Endothelial cell of umbilical vein (primary cell): ENCODE measurements at regions of chr6 and their contacts with region 1.

Region 1: GRCh38 chr6:169789982-169790927 is 38.8 kb downstream of the ERMARD start:
- DNase-seq: peak; percentile 75
- H3K4me3 ChIP-seq: peak overlapping the region; percentile 14 to 33 (median 24)
- H3K27ac ChIP-seq: no peak overlapping the region
- H3K4me1 ChIP-seq: peaks cover 6% of the 10 kb centered on the region
- H3K27me3 ChIP-seq: peaks cover 0 to 4% of the 10 kb centered on the region in 2 experiments
- CTCF ChIP-seq: peak; percentile 97 to 99
- POLR2A ChIP-seq: no peak

Region 2: DNA sequence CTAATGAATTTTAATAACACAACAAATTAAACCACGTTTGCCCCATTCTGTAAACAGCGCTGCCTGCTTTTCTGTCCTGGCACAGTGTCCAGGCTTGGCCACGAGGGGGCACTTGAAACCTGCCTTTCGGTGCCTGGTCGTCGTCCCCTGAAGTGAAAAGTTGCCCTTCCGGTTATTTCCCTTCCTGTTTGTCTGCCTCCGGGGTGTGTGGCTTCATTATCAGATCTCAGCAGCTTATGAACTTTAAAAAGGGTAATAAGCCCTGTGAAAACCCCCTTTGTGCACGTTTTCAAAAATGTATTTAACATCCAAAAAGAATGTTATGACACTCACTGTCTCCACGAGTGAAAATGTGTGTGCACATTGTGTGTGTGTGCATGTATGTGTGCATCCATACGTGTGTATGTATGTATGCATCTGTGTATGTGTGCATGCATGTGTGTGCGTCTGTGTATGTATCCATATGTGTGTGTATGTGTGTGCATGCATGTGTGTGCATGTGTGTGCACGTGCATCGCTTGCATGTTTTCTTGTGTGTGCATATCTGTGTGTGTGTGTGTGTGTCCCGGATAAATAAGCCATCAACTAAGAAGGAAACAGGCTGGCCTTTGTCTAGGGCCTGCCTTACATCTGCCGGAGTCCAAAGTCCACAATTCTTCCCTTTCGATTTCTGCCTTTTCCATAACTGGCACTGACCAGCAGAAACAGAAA is 895.0 kb before region 1 on chr6:
- CTCF ChIA-PET with region 1: interaction called, 4 read pairs
- POLR2A ChIA-PET with region 1: no interaction called
- dilution Hi-C with region 1: no loop called
- intact Hi-C with region 1: loop called (anchors 1 kb)
- DNase-seq: peak; percentile 44
- H3K4me3 ChIP-seq: no peak overlapping the region
- H3K27ac ChIP-seq: no peak overlapping the region
- H3K4me1 ChIP-seq: no peaks in the 10 kb centered on the region
- H3K27me3 ChIP-seq: no peaks in the 10 kb centered on the region
- CTCF ChIP-seq: peak; percentile 88
- POLR2A ChIP-seq: no peak

Region 3: DNA sequence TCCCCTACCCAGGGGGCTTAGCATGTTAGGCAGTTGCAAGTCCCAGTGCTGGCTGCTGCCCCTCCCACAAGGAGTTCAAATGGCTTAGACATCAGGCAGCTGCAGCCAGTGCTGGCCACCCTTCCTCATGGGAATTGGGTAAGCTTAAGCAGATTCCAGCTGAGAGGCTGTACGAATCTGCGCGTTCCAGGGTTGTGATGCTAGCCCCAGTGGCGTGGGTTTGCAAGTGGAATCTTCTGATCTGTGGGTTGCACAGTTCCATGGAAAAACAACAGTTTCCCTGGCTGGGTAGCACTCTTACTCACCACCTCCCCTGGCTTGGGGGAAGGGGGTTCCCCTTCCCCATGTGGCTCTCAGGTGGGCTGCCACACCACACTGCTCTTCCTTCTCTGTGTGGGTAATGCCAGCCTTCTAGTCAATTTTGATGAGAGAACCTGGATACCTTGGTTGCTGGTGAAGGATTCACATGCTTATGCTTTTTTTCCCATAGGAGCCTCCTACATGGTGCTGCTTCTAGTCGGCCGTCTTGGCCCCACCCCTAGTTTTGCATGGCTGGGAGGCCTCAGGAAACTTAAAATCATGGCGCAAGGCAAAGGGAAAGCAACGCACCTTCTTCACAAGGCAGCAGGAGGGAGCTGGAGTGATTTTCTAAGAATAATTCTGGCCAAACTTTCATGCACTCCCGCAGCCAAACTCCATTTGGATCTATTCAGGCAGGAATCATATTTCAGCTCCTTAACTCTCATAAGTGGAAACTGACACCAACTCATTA is 51.9 kb before region 1 on chr6:
- CTCF ChIA-PET with region 1: no interaction called
- POLR2A ChIA-PET with region 1: no interaction called
- dilution Hi-C with region 1: no loop called
- intact Hi-C with region 1: no loop called
- DNase-seq: no peak
- H3K4me3 ChIP-seq: no peak overlapping the region
- H3K27ac ChIP-seq: no peak overlapping the region
- H3K4me1 ChIP-seq: no peaks in the 10 kb centered on the region
- H3K27me3 ChIP-seq: peaks cover 0 to 8% of the 10 kb centered on the region in 2 experiments
- CTCF ChIP-seq: no peak
- POLR2A ChIP-seq: no peak

Region 4: GRCh38 chr6:169800668-169801395 is 10.6 kb after region 1 on chr6:
- CTCF ChIA-PET with region 1: interaction called, 33 read pairs
- POLR2A ChIA-PET with region 1: no interaction called
- dilution Hi-C with region 1: no loop called
- intact Hi-C with region 1: no loop called
- DNase-seq: no peak
- H3K4me3 ChIP-seq: no peak overlapping the region
- H3K27ac ChIP-seq: no peak overlapping the region
- H3K4me1 ChIP-seq: no peaks in the 10 kb centered on the region
- H3K27me3 ChIP-seq: peaks cover 0 to 16% of the 10 kb centered on the region in 2 experiments
- CTCF ChIP-seq: no peak
- POLR2A ChIP-seq: no peak

Region 5: DNA sequence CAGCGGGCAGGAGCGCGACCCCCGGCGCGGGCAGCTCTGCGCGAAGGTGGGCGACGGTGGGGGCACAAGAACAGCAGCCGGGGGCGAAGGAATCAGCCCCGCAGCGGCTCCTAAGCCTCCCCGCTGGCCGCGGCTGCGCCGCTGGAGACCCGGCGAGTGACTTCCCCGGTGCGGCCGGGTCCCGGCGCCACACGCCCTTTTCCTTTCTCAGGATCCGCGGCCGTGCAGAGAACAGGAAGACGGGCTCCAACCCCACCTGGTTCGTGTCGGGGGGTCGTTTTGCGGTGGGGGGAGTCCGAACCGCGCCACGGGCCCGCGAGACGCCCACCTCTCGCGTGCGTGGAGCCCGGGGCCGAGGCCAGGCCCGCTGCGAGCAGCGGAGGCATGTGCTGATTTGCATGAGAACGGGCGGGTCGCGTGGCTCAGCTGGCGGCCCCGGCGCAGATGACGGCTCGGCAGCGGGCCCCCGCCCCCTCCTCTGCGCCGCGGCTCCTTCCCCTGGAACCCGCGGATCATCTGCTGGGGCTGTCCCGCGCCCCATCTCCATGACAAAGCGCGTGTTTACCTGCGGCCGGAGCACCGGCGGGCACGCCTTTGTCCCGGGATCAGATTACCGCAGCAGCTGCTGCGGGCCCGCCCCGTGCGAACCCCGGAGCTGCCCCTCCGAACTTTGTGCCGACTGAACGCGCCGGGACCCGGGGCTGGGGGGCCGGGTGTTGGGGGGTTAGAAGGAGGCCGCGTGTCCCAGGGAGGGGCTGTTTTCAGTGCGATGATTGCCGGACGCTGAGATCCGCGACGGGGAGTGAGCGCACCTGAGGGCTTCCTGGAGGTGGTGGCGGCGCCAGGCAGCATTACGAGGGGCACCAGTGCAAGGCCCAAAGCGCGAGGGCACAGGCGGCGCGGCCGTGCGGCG is 505.5 kb after region 1 on chr6:
- CTCF ChIA-PET with region 1: interaction called, 6 read pairs
- POLR2A ChIA-PET with region 1: no interaction called
- dilution Hi-C with region 1: no loop called
- intact Hi-C with region 1: loop called (anchors 1 kb)
- DNase-seq: peak; percentile 21
- H3K4me3 ChIP-seq: peak overlapping the region; percentile 14 to 36 (median 34)
- H3K27ac ChIP-seq: no peak overlapping the region
- H3K4me1 ChIP-seq: peaks cover 17% of the 10 kb centered on the region
- H3K27me3 ChIP-seq: peaks cover 29 to 62% of the 10 kb centered on the region in 2 experiments
- CTCF ChIP-seq: no peak
- POLR2A ChIP-seq: no peak

Region 6: DNA sequence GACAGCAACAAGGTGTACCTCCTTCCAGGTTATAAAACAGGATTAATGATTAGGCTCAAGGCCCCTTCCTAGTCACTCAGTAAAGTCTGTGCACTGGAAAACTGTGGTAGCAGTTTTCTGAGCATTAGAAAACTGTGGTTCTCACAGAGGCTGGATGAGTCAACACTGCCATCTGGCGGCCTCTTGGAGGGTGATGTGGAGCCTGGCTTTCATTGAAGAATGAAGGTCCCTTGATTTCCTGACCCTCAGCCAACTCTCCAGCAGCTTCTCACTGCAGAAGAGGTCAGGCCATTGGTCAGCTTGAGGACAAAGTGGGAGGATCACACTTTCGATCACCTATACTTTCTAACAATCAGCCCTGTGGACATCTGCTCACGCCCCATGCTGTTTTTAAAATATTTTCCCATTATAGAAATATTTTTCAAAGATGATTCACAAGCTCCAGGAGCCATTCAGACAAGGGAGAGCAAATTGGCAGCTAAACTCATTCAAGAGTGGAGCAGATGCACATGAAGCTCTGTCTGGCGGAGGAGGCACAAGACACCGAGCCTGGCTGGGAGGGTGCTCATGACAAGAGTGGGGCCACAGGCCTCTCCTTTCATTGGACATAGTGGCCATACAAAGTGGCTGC is 739.7 kb after region 1 on chr6:
- CTCF ChIA-PET with region 1: interaction called, 68 read pairs
- POLR2A ChIA-PET with region 1: no interaction called
- dilution Hi-C with region 1: no loop called
- intact Hi-C with region 1: loop called (anchors 1 kb)
- DNase-seq: peak; percentile 67
- H3K4me3 ChIP-seq: no peak overlapping the region
- H3K27ac ChIP-seq: no peak overlapping the region
- H3K4me1 ChIP-seq: no peaks in the 10 kb centered on the region
- H3K27me3 ChIP-seq: no peaks in the 10 kb centered on the region
- CTCF ChIP-seq: peak; percentile 87 to 90
- POLR2A ChIP-seq: no peak